A549 (cell line): ENCODE measurements at regions of chr1 and their contacts with region 1.

Region 1: GRCh38 chr1:226679853-226680516 is 59.1 kb downstream of the ITPKB start:
- DNase-seq: no peak
- ATAC-seq: no peak
- H3K4me3 ChIP-seq: no peak overlapping the region
- H3K27ac ChIP-seq: no peak overlapping the region
- H3K4me1 ChIP-seq: peaks cover 11% of the 10 kb centered on the region; the same call in 2 of the 3 replicates
- CTCF ChIP-seq: no peak
- EP300 ChIP-seq: no peak
- POLR2A ChIP-seq: no peak
- RAD21 ChIP-seq: no peak

Region 2: DNA sequence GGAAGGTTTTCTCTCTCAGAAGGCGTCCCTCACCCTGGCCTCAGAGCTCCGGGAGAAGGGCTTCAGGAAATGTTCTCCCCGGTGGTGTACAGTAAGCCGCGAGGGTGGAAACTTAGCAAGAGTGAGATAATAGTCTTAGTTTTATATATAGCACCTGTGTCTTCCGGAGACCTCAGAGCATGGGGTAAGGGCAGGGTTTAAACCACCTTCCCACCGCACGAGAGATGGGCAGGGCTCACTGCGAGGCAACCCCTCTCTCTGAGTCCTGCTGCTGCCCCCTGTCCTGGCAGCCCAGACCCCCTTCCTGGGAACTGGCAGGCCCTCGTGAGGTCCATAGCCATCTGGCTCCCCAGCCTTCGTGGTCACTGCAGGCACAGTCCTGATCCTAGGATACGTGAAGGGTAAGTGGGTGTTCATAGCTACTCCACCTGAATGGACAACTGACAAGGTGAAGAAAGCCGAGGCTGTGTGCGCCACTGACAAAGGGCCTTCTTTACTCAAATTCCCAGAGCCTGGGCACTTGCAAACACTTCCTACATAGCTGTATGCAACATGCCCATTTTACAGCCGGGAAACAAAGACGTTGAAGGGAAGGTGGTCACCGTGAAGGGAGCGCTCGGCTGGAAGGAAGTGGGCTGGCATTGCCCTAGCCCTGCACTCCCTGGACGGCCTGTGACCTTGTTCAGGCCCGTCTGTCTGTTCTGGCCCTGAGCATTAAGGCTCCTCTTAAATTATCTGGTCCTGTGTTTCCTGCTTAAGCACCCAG is 32.2 kb after region 1 on chr1:
- CTCF ChIA-PET with region 1: interaction called, 13 read pairs
- POLR2A ChIA-PET with region 1: no interaction called
- DNase-seq: no peak
- ATAC-seq: peak in 1 of 2 experiments; percentile 21; a peak in 2 of 6 replicates
- H3K4me3 ChIP-seq: no peak overlapping the region
- H3K27ac ChIP-seq: no peak overlapping the region
- H3K4me1 ChIP-seq: 0 out of 3 replicates have a peak, but pooled peaks cover 3% of the 10 kb centered on the region
- CTCF ChIP-seq: no peak
- EP300 ChIP-seq: no peak
- POLR2A ChIP-seq: no peak
- RAD21 ChIP-seq: no peak